ENCODE measurements at regions of chr1 and their contacts with region 1.

Region 1: GRCh38 chr1:93734999-93735398 is 53.4 kb upstream of the BCAR3 start:
- DNase-seq: no peak
- ATAC-seq: no peak
- H3K4me3 ChIP-seq: no peak overlapping the region
- H3K27ac ChIP-seq: no peak overlapping the region
- H3K4me1 ChIP-seq: peaks cover 20% of the 10 kb centered on the region
- H3K27me3 ChIP-seq: no peaks in the 10 kb centered on the region
- CTCF ChIP-seq: peak; percentile 40
- POLR2A ChIP-seq: no peak
- RAD21 ChIP-seq: peak; percentile 32

Region 2: DNA sequence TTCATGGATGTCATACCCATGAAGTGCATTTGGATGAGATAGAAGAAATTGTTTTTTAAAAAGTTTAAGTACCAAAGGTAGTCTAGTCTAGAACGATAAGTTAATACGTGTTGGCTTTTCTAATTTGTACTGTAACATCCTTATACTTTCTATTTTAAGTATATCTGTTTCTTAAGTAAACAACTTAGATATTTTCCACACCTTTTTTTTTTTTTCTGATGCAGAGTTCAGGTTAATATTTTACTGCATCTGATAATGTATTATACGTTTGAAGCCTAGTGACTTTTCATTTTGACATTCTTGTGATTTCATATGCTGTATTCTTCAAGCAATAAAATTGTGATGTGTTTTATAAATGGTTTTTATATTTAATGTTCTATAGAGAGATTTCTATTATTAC is 372.8 kb before region 1 on chr1:
- CTCF ChIA-PET with region 1: no interaction called
- POLR2A ChIA-PET with region 1: no interaction called
- dilution Hi-C with region 1: no loop called
- in situ Hi-C with region 1: no loop called
- intact Hi-C with region 1: no loop called
- DNase-seq: no peak
- ATAC-seq: no peak
- H3K4me3 ChIP-seq: no peak overlapping the region
- H3K27ac ChIP-seq: no peak overlapping the region
- H3K4me1 ChIP-seq: no peaks in the 10 kb centered on the region
- H3K27me3 ChIP-seq: no peaks in the 10 kb centered on the region
- CTCF ChIP-seq: no peak
- POLR2A ChIP-seq: no peak
- RAD21 ChIP-seq: no peak

Region 3: DNA sequence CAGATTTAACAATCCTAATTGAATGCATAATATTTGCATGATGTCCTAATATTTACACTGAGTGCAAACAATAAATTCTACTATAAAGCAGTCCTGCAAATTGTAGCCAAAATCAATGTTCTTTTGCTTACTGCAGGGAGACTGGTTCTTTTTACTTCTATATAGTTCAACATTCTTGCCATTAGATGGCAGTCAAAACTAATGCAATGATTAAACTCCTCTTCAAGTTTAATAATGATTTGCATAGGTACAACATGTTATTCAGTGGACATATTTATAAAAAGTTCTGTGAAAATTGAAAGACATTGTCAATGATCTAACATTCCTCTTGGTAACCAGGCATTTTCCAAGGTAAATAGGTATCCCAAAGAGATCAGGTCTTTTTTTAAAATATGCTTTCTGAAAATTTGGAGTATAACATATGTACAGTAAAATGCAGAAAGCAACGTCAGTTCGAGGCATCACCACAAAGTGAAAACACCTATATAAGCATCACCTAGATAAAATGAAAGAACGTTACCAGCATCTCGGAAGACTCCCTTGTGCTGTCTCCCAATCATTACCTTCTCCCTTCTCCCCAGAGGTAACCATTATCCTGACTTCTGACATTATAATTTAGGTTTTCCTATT is 296.9 kb before region 1 on chr1:
- CTCF ChIA-PET with region 1: no interaction called
- POLR2A ChIA-PET with region 1: no interaction called
- dilution Hi-C with region 1: no loop called
- in situ Hi-C with region 1: no loop called
- intact Hi-C with region 1: loop called (anchors 5 kb)
- DNase-seq: peak; percentile 65
- ATAC-seq: peak; percentile 82
- H3K4me3 ChIP-seq: no peak overlapping the region
- H3K27ac ChIP-seq: no peak overlapping the region
- H3K4me1 ChIP-seq: no peaks in the 10 kb centered on the region
- H3K27me3 ChIP-seq: peaks cover 17% of the 10 kb centered on the region
- CTCF ChIP-seq: peak; percentile 78
- POLR2A ChIP-seq: no peak
- RAD21 ChIP-seq: peak; percentile 81

Region 4: GRCh38 chr1:93489756-93490155 is 245.2 kb before region 1 on chr1:
- CTCF ChIA-PET with region 1: no interaction called
- POLR2A ChIA-PET with region 1: no interaction called
- dilution Hi-C with region 1: no loop called
- in situ Hi-C with region 1: no loop called
- intact Hi-C with region 1: no loop called
- DNase-seq: peak; percentile 7
- ATAC-seq: no peak
- H3K4me3 ChIP-seq: no peak overlapping the region
- H3K27ac ChIP-seq: no peak overlapping the region
- H3K4me1 ChIP-seq: no peaks in the 10 kb centered on the region; the same call in 1 of the 2 replicates
- H3K27me3 ChIP-seq: no peaks in the 10 kb centered on the region
- CTCF ChIP-seq: no peak
- POLR2A ChIP-seq: no peak
- RAD21 ChIP-seq: no peak

Region 5: GRCh38 chr1:93579891-93580290 is 155.1 kb before region 1 on chr1:
- CTCF ChIA-PET with region 1: no interaction called
- POLR2A ChIA-PET with region 1: no interaction called
- dilution Hi-C with region 1: no loop called
- in situ Hi-C with region 1: no loop called
- intact Hi-C with region 1: no loop called
- DNase-seq: peak; percentile 97
- ATAC-seq: peak; percentile 97
- H3K4me3 ChIP-seq: no peak overlapping the region
- H3K27ac ChIP-seq: peak overlapping the region; percentile 72
- H3K4me1 ChIP-seq: peaks cover 14% of the 10 kb centered on the region
- H3K27me3 ChIP-seq: no peaks in the 10 kb centered on the region
- CTCF ChIP-seq: no peak
- POLR2A ChIP-seq: no peak
- RAD21 ChIP-seq: peak; percentile 26; the same call in 1 of the 2 replicates

Region 6: DNA sequence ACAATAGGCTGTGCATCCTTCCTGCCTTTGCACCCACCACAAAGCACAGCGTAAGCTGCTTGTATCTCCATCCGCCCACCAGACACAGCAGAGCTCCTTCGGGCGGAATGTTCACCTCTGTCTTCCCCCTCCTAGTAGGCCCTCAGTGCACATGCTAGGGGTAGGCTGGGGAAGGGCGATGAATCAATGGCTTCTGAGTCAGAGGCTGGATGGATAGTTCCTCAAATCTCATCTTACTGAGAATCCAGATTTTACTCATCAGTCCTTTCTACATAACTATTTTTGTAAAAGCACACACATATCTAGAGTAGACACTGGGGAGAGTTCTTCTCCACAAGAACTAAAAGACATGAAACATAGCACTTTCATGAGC is 127.2 kb before region 1 on chr1:
- CTCF ChIA-PET with region 1: no interaction called
- POLR2A ChIA-PET with region 1: no interaction called
- dilution Hi-C with region 1: no loop called
- in situ Hi-C with region 1: no loop called
- intact Hi-C with region 1: no loop called
- DNase-seq: peak; percentile 73
- ATAC-seq: peak; percentile 40
- H3K4me3 ChIP-seq: no peak overlapping the region
- H3K27ac ChIP-seq: 0 out of 2 replicates have a peak overlapping the region, but pooled peaks have one; percentile 5
- H3K4me1 ChIP-seq: peaks cover 28% of the 10 kb centered on the region
- H3K27me3 ChIP-seq: no peaks in the 10 kb centered on the region
- CTCF ChIP-seq: no peak
- POLR2A ChIP-seq: no peak
- RAD21 ChIP-seq: no peak

Region 7: GRCh38 chr1:93680757-93681550 is 54.0 kb before region 1 on chr1:
- CTCF ChIA-PET with region 1: interaction called, 6 read pairs
- POLR2A ChIA-PET with region 1: interaction called, 14 read pairs
- dilution Hi-C with region 1: no loop called
- in situ Hi-C with region 1: no loop called
- intact Hi-C with region 1: loop called (anchors 5 kb)
- DNase-seq: peak; percentile 89
- ATAC-seq: peak; percentile 75
- H3K4me3 ChIP-seq: peak overlapping the region; percentile 57
- H3K27ac ChIP-seq: peak overlapping the region; percentile 67
- H3K4me1 ChIP-seq: peaks cover 21% of the 10 kb centered on the region
- H3K27me3 ChIP-seq: no peaks in the 10 kb centered on the region
- CTCF ChIP-seq: peak; percentile 62
- POLR2A ChIP-seq: no peak
- RAD21 ChIP-seq: peak; percentile 66

Region 8: GRCh38 chr1:93804412-93804811 is 69.4 kb after region 1 on chr1:
- CTCF ChIA-PET with region 1: no interaction called
- POLR2A ChIA-PET with region 1: no interaction called
- dilution Hi-C with region 1: no loop called
- in situ Hi-C with region 1: no loop called
- intact Hi-C with region 1: loop called (anchors 1 kb)
- DNase-seq: peak; percentile 95
- ATAC-seq: peak; percentile 93
- H3K4me3 ChIP-seq: peak overlapping the region; percentile 37; the same call in 1 of the 2 replicates
- H3K27ac ChIP-seq: 0 out of 2 replicates have a peak overlapping the region, but pooled peaks have one; percentile 34
- H3K4me1 ChIP-seq: peaks cover 7% of the 10 kb centered on the region
- H3K27me3 ChIP-seq: no peaks in the 10 kb centered on the region
- CTCF ChIP-seq: no peak
- POLR2A ChIP-seq: no peak
- RAD21 ChIP-seq: 0 out of 2 replicates have a peak, but pooled peaks have one; percentile 10

Region 9: GRCh38 chr1:93814059-93814794 is 79.2 kb after region 1 on chr1:
- CTCF ChIA-PET with region 1: interaction called, 20 read pairs
- POLR2A ChIA-PET with region 1: no interaction called
- dilution Hi-C with region 1: no loop called
- in situ Hi-C with region 1: no loop called
- intact Hi-C with region 1: loop called (anchors 1 kb)
- DNase-seq: peak; percentile 84
- ATAC-seq: peak; percentile 88
- H3K4me3 ChIP-seq: no peak overlapping the region
- H3K27ac ChIP-seq: no peak overlapping the region
- H3K4me1 ChIP-seq: peaks cover 10% of the 10 kb centered on the region
- H3K27me3 ChIP-seq: no peaks in the 10 kb centered on the region
- CTCF ChIP-seq: peak; percentile 99
- POLR2A ChIP-seq: peak; percentile 63; the same call in 1 of the 2 replicates
- RAD21 ChIP-seq: peak; percentile 100

Measured in IMR-90 (cell line).